Endothelial cell of umbilical vein (primary cell): ENCODE measurements at regions of chr21 and their contacts with region 1.

Region 1: GRCh38 chr21:34745557-34746255 is 76.9 kb downstream of the CLIC6 start:
- DNase-seq: peak; percentile 74
- H3K4me3 ChIP-seq: no peak overlapping the region
- H3K27ac ChIP-seq: no peak overlapping the region
- H3K4me1 ChIP-seq: no peaks in the 10 kb centered on the region
- H3K27me3 ChIP-seq: peaks cover 11 to 23% of the 10 kb centered on the region in 2 experiments
- CTCF ChIP-seq: peak; percentile 80 to 90
- POLR2A ChIP-seq: no peak

Region 2: GRCh38 chr21:34617753-34618339 is 127.9 kb before region 1 on chr21:
- CTCF ChIA-PET with region 1: no interaction called
- POLR2A ChIA-PET with region 1: no interaction called
- dilution Hi-C with region 1: no loop called
- intact Hi-C with region 1: no loop called
- DNase-seq: no peak
- H3K4me3 ChIP-seq: no peak overlapping the region
- H3K27ac ChIP-seq: no peak overlapping the region
- H3K4me1 ChIP-seq: peaks cover 4% of the 10 kb centered on the region
- H3K27me3 ChIP-seq: peaks cover 11 to 16% of the 10 kb centered on the region in 2 experiments
- CTCF ChIP-seq: no peak
- POLR2A ChIP-seq: no peak

Region 3: GRCh38 chr21:34693192-34693810 is 52.4 kb before region 1 on chr21:
- CTCF ChIA-PET with region 1: interaction called, 13 read pairs
- POLR2A ChIA-PET with region 1: no interaction called
- dilution Hi-C with region 1: no loop called
- intact Hi-C with region 1: no loop called
- DNase-seq: peak; percentile 57
- H3K4me3 ChIP-seq: no peak overlapping the region
- H3K27ac ChIP-seq: no peak overlapping the region
- H3K4me1 ChIP-seq: no peaks in the 10 kb centered on the region
- H3K27me3 ChIP-seq: peaks cover 14 to 30% of the 10 kb centered on the region in 2 experiments
- CTCF ChIP-seq: peak; percentile 79 to 81
- POLR2A ChIP-seq: no peak

Region 4: GRCh38 chr21:34762761-34763160 is 17.1 kb after region 1 on chr21:
- CTCF ChIA-PET with region 1: interaction called, 26 read pairs
- POLR2A ChIA-PET with region 1: no interaction called
- dilution Hi-C with region 1: no loop called
- intact Hi-C with region 1: no loop called
- DNase-seq: no peak
- H3K4me3 ChIP-seq: no peak overlapping the region
- H3K27ac ChIP-seq: no peak overlapping the region
- H3K4me1 ChIP-seq: no peaks in the 10 kb centered on the region
- H3K27me3 ChIP-seq: peaks cover 2 to 6% of the 10 kb centered on the region in 2 experiments
- CTCF ChIP-seq: no peak
- POLR2A ChIP-seq: no peak

Region 5: GRCh38 chr21:34852448-34852847 is 106.7 kb after region 1 on chr21:
- CTCF ChIA-PET with region 1: interaction called, 18 read pairs
- POLR2A ChIA-PET with region 1: no interaction called
- dilution Hi-C with region 1: no loop called
- intact Hi-C with region 1: no loop called
- DNase-seq: no peak
- H3K4me3 ChIP-seq: no peak overlapping the region
- H3K27ac ChIP-seq: no peak overlapping the region
- H3K4me1 ChIP-seq: peaks cover 5% of the 10 kb centered on the region
- H3K27me3 ChIP-seq: no peaks in the 10 kb centered on the region
- CTCF ChIP-seq: no peak
- POLR2A ChIP-seq: no peak

Region 6: DNA sequence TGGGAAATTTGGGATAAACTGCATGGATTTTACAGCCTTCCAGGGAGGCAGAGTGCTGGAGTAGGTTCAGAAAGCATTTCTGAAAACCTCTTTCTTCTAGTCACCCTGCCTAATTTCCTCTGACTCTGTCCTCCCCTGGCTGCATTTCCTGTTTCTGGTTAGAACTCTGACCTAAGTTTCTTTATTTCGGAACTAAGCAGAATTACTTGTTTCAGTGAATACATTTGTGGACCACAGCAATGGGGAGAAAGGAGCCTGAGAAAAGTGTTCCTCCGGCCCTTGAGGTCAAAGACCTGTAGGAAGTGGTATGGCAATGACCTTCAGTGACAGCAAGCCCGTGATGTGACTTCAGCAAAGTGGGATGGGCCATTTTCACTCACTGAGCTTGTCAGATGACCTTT is 476.8 kb after region 1 on chr21:
- CTCF ChIA-PET with region 1: no interaction called
- POLR2A ChIA-PET with region 1: no interaction called
- dilution Hi-C with region 1: no loop called
- intact Hi-C with region 1: no loop called
- DNase-seq: peak; percentile 40
- H3K4me3 ChIP-seq: peak overlapping the region in 1 of 3 experiments; percentile 13
- H3K27ac ChIP-seq: no peak overlapping the region
- H3K4me1 ChIP-seq: peaks cover 14% of the 10 kb centered on the region
- H3K27me3 ChIP-seq: no peaks in the 10 kb centered on the region
- CTCF ChIP-seq: no peak
- POLR2A ChIP-seq: no peak

Region 7: DNA sequence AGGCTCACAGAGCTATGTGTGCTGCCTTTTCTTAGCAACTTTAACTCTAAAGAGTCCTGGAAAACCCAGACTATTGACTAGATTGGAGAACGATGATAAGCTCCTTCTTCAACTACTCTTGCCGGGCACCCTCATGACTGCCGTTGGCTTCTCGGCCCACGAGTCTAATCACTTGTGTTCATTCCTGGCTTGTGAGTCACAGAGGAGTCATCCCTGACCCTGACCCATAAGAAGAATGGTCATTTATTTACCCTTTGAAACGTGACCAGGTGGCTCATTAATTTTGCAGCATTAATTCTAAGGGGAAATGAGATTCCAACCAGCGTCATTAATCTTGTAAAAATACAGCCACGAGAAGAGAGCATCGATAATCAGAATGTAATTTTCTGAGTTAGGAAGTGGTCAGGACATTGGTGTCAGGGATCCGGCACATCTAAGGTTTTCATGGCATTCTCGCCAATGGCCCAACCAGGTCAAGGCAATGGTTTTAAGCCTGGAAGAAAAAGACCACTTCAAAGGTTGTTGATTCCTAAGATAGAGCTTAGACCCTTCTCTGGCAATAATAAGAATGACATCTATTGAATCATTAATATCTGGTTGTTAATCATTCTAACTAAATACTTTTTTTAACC is 487.0 kb after region 1 on chr21:
- CTCF ChIA-PET with region 1: interaction called, 10 read pairs
- POLR2A ChIA-PET with region 1: no interaction called
- dilution Hi-C with region 1: no loop called
- intact Hi-C with region 1: no loop called
- DNase-seq: peak; percentile 93
- H3K4me3 ChIP-seq: no peak overlapping the region
- H3K27ac ChIP-seq: peak overlapping the region; percentile 70
- H3K4me1 ChIP-seq: peaks cover 19% of the 10 kb centered on the region
- H3K27me3 ChIP-seq: no peaks in the 10 kb centered on the region
- CTCF ChIP-seq: no peak
- POLR2A ChIP-seq: no peak

Region 8: DNA sequence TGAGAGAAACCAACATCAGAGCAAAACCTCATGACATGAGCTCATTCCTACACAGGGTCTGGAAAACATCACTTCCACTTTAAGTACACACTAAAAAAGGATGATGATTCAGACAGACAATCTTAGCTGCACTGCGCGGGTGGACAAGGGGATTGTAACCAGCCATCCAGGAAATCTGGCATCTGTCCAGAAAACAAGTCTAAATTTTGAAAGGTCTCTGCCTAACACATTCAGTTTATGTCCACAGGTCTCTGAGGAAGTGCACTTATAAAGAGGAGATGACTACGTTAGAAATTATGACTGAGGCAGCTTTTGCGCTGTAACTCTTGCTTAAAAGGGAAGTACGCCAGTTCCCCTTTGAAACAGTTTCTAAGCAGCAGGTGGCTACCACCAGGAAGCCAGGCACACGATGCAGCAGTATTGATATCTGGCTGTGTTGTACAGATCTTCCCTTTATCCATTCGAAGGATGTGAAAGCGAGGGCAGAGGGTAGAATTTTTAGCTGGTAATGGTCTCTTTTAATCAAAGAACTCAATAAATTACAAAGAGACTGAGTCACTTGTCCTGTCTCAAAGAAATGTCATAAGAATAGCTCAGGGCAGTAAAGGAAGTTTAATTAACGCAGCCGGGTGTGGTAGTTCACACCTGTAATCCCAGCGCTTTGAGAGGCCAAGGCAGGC is 1186.7 kb after region 1 on chr21:
- CTCF ChIA-PET with region 1: interaction called, 18 read pairs
- POLR2A ChIA-PET with region 1: no interaction called
- dilution Hi-C with region 1: no loop called
- intact Hi-C with region 1: loop called (anchors 2 kb)
- DNase-seq: peak; percentile 95
- H3K4me3 ChIP-seq: peak overlapping the region in 1 of 3 experiments; percentile 21
- H3K27ac ChIP-seq: peak overlapping the region; percentile 87
- H3K4me1 ChIP-seq: peaks cover 26% of the 10 kb centered on the region
- H3K27me3 ChIP-seq: no peaks in the 10 kb centered on the region
- CTCF ChIP-seq: no peak
- POLR2A ChIP-seq: no peak